HepG2 (cell line): ENCODE measurements at regions of chr3 and their contacts with region 1.

Region 1: GRCh38 chr3:75171630-75172230 is 492.4 kb upstream of the FRG2C start:
- DNase-seq: no peak
- ATAC-seq: no peak
- H3K4me3 ChIP-seq: no peak overlapping the region
- H3K27ac ChIP-seq: no peak overlapping the region
- H3K4me1 ChIP-seq: no peaks in the 10 kb centered on the region
- H3K27me3 ChIP-seq: no peaks in the 10 kb centered on the region; a peak in 1 of 5 replicates
- CTCF ChIP-seq: peak; percentile 33
- EP300 ChIP-seq: no peak
- POLR2A ChIP-seq: no peak
- RAD21 ChIP-seq: no peak

Region 2: GRCh38 chr3:74267588-74268184 is 904.0 kb before region 1 on chr3:
- CTCF ChIA-PET with region 1: interaction called, 4 read pairs
- POLR2A ChIA-PET with region 1: no interaction called
- in situ Hi-C with region 1: loop called (anchors 25 kb)
- intact Hi-C with region 1: loop called (anchors 5 kb)
- DNase-seq: peak; percentile 40
- ATAC-seq: peak; percentile 69
- H3K4me3 ChIP-seq: no peak overlapping the region
- H3K27ac ChIP-seq: no peak overlapping the region
- H3K4me1 ChIP-seq: no peaks in the 10 kb centered on the region
- H3K27me3 ChIP-seq: no peaks in the 10 kb centered on the region
- CTCF ChIP-seq: peak; percentile 67
- EP300 ChIP-seq: no peak
- POLR2A ChIP-seq: no peak
- RAD21 ChIP-seq: no peak

Region 3: GRCh38 chr3:74916696-74917095 is 255.0 kb before region 1 on chr3:
- CTCF ChIA-PET with region 1: no interaction called
- POLR2A ChIA-PET with region 1: no interaction called
- in situ Hi-C with region 1: no loop called
- intact Hi-C with region 1: no loop called
- DNase-seq: no peak
- ATAC-seq: no peak
- H3K4me3 ChIP-seq: no peak overlapping the region
- H3K27ac ChIP-seq: no peak overlapping the region
- H3K4me1 ChIP-seq: no peaks in the 10 kb centered on the region
- H3K27me3 ChIP-seq: no peaks in the 10 kb centered on the region
- CTCF ChIP-seq: no peak
- EP300 ChIP-seq: no peak
- POLR2A ChIP-seq: no peak
- RAD21 ChIP-seq: no peak